IMR-90 (cell line): ENCODE measurements at regions of chr4 and their contacts with region 1.

Region 1: GRCh38 chr4:185039508-185040273 is 21.4 kb downstream of the HELT start:
- DNase-seq: peak; percentile 68
- ATAC-seq: peak; percentile 99
- H3K4me3 ChIP-seq: peak overlapping the region; percentile 34
- H3K27ac ChIP-seq: no peak overlapping the region
- H3K4me1 ChIP-seq: no peaks in the 10 kb centered on the region
- H3K27me3 ChIP-seq: peaks cover 7% of the 10 kb centered on the region
- CTCF ChIP-seq: peak; percentile 86
- POLR2A ChIP-seq: no peak
- RAD21 ChIP-seq: peak; percentile 72

Region 2: GRCh38 chr4:185082561-185082960 is 42.9 kb after region 1 on chr4:
- CTCF ChIA-PET with region 1: no interaction called
- POLR2A ChIA-PET with region 1: no interaction called
- dilution Hi-C with region 1: no loop called
- in situ Hi-C with region 1: no loop called
- intact Hi-C with region 1: no loop called
- DNase-seq: no peak
- ATAC-seq: no peak
- H3K4me3 ChIP-seq: no peak overlapping the region
- H3K27ac ChIP-seq: no peak overlapping the region
- H3K4me1 ChIP-seq: no peaks in the 10 kb centered on the region
- H3K27me3 ChIP-seq: peaks cover 11% of the 10 kb centered on the region
- CTCF ChIP-seq: no peak
- POLR2A ChIP-seq: no peak
- RAD21 ChIP-seq: no peak

Region 3: GRCh38 chr4:185096032-185096653 is 56.5 kb after region 1 on chr4:
- CTCF ChIA-PET with region 1: interaction called, 3 read pairs
- POLR2A ChIA-PET with region 1: no interaction called
- dilution Hi-C with region 1: no loop called
- in situ Hi-C with region 1: no loop called
- intact Hi-C with region 1: loop called (anchors 1 kb)
- DNase-seq: peak; percentile 31
- ATAC-seq: 0 out of 2 replicates have a peak, but pooled peaks have one; percentile 37
- H3K4me3 ChIP-seq: no peak overlapping the region
- H3K27ac ChIP-seq: no peak overlapping the region
- H3K4me1 ChIP-seq: no peaks in the 10 kb centered on the region
- H3K27me3 ChIP-seq: peaks cover 16% of the 10 kb centered on the region
- CTCF ChIP-seq: peak; percentile 64
- POLR2A ChIP-seq: no peak
- RAD21 ChIP-seq: peak; percentile 58

Region 4: GRCh38 chr4:185134307-185134869 is 94.7 kb after region 1 on chr4:
- CTCF ChIA-PET with region 1: interaction called, 12 read pairs
- POLR2A ChIA-PET with region 1: no interaction called
- dilution Hi-C with region 1: no loop called
- in situ Hi-C with region 1: loop called (anchors 5 kb)
- intact Hi-C with region 1: loop called (anchors 1 kb)
- DNase-seq: peak; percentile 61
- ATAC-seq: peak; percentile 87
- H3K4me3 ChIP-seq: no peak overlapping the region
- H3K27ac ChIP-seq: no peak overlapping the region
- H3K4me1 ChIP-seq: no peaks in the 10 kb centered on the region
- H3K27me3 ChIP-seq: peaks cover 2% of the 10 kb centered on the region; the same call in 1 of the 2 replicates
- CTCF ChIP-seq: peak; percentile 85
- POLR2A ChIP-seq: no peak
- RAD21 ChIP-seq: peak; percentile 84

Region 5: GRCh38 chr4:185183619-185184281 is 144.1 kb after region 1 on chr4:
- CTCF ChIA-PET with region 1: interaction called, 10 read pairs
- POLR2A ChIA-PET with region 1: no interaction called
- dilution Hi-C with region 1: no loop called
- in situ Hi-C with region 1: no loop called
- intact Hi-C with region 1: loop called (anchors 1 kb)
- DNase-seq: peak; percentile 93
- ATAC-seq: peak; percentile 71
- H3K4me3 ChIP-seq: no peak overlapping the region
- H3K27ac ChIP-seq: no peak overlapping the region
- H3K4me1 ChIP-seq: peaks cover 5% of the 10 kb centered on the region; the same call in 1 of the 2 replicates
- H3K27me3 ChIP-seq: no peaks in the 10 kb centered on the region
- CTCF ChIP-seq: peak; percentile 84
- POLR2A ChIP-seq: no peak
- RAD21 ChIP-seq: peak; percentile 73

Region 6: DNA sequence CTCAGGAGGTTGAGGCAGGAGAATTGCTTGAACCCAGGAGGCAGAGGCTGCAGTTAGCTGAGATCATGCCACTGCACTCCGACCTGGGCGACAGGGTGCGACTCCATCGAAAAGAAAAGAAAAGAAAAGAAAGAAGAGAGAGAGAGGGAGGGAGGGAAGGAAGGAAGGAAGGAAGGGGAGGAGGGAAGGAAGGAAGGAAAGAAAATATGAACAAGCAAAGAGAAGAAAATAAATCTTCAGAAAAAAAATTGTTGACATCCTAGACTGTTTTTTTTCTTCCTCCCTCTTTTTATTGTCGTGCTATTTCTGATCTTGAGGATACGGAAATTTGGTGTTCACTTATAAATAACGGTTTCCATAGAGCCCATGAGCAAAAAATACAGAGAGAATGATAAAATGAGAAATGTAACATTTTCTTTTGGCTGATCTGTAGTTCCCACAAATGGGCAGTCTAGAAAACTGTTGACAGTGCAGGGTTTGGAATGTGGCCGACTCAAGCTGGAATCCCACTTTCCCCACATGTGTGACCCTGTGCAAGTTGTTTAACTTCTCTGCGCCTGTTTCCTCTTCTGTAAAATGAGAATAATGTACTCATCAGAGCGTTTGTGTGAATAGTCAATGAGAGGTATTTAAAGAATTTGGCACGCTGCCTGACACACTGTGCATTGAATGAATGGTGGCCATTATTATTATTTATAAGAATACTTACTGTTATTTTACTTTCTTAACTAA is 752.9 kb after region 1 on chr4:
- CTCF ChIA-PET with region 1: no interaction called
- POLR2A ChIA-PET with region 1: no interaction called
- dilution Hi-C with region 1: no loop called
- in situ Hi-C with region 1: no loop called
- intact Hi-C with region 1: no loop called
- DNase-seq: peak; percentile 96
- ATAC-seq: peak; percentile 92
- H3K4me3 ChIP-seq: no peak overlapping the region
- H3K27ac ChIP-seq: peak overlapping the region; percentile 20; the same call in 1 of the 2 replicates
- H3K4me1 ChIP-seq: peaks cover 11% of the 10 kb centered on the region
- H3K27me3 ChIP-seq: peaks cover 2% of the 10 kb centered on the region; the same call in 1 of the 2 replicates
- CTCF ChIP-seq: no peak
- POLR2A ChIP-seq: no peak
- RAD21 ChIP-seq: no peak

Region 7: DNA sequence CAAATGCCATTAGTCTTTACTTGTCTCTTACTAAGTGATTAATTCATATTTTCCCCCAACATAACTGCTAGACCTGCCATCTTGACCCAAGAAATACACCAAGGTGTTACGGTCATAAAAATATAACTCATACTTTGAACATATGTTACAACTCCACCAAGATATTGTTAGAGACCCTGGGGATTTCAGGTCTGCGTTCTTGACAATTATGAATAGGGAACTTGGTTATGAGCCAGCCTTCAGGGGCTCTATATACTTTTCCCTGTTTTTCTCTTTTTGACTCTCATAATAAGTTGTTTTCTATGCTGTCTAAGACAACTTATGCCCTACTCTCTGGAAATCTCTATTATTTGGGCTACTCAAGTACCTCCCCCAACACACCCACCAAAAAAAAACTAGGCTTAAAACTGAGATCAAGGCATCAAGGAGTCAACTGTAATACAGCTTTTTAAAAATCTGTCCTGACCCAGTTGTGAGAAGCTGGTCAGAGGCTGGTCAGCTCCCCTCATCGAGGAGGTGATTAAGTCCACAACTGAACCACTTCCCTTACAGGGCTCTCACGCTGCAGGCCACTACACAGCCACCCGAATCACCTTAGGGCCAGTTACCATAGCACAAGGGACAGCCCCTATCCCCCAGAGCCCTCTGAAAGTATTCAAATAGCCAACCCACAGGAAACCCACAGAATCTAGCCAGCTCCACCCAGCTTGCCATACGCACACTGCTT is 1018.7 kb after region 1 on chr4:
- CTCF ChIA-PET with region 1: no interaction called
- POLR2A ChIA-PET with region 1: no interaction called
- dilution Hi-C with region 1: no loop called
- in situ Hi-C with region 1: no loop called
- intact Hi-C with region 1: no loop called
- DNase-seq: no peak
- ATAC-seq: no peak
- H3K4me3 ChIP-seq: no peak overlapping the region
- H3K27ac ChIP-seq: no peak overlapping the region
- H3K4me1 ChIP-seq: no peaks in the 10 kb centered on the region
- H3K27me3 ChIP-seq: no peaks in the 10 kb centered on the region
- CTCF ChIP-seq: no peak
- POLR2A ChIP-seq: no peak
- RAD21 ChIP-seq: no peak